Prostate gland (tissue), 2 donors: ENCODE measurements at regions of chr14 and their contacts with region 1.

Region 1: GRCh38 chr14:54572316-54572715 is 5.4 kb downstream of the SAMD4A start:
- DNase-seq: no peak
- H3K4me3 ChIP-seq: no peak overlapping the region
- H3K27ac ChIP-seq: no peak overlapping the region
- H3K4me1 ChIP-seq: no peaks in the 10 kb centered on the region
- H3K27me3 ChIP-seq: no peaks in the 10 kb centered on the region
- CTCF ChIP-seq: peak in 1 of 4 experiments; percentile 21
- POLR2A ChIP-seq: no peak

Region 2: DNA sequence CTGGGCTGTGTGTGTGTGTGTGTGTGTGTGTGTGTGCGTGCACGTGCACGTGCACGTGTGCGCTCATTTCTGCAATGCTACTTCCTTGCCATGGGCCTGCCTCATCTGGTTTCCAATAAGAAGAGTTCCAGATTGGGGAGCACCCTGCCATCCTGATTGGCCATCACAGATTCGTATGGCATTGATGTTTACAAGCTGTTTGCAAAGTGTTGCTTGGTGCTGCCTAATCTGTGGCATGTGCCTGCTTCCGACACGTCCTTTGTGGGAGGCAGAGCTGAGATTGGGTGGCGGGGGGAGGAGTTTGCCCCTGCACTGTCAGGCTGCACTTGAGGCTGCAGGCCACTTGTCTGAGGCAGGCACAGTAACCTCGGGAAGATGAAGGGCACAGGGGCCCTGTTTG is 33.9 kb after region 1 on chr14:
- intact Hi-C with region 1: loop called (anchors 5 kb)
- DNase-seq: no peak
- H3K4me3 ChIP-seq: no peak overlapping the region
- H3K27ac ChIP-seq: no peak overlapping the region
- H3K4me1 ChIP-seq: no peaks in the 10 kb centered on the region
- H3K27me3 ChIP-seq: no peaks in the 10 kb centered on the region
- CTCF ChIP-seq: no peak
- POLR2A ChIP-seq: no peak

Region 3: GRCh38 chr14:54642801-54643697 is 70.7 kb after region 1 on chr14:
- intact Hi-C with region 1: loop called (anchors 5 kb)
- DNase-seq: no peak
- H3K4me3 ChIP-seq: no peak overlapping the region
- H3K27ac ChIP-seq: no peak overlapping the region
- H3K4me1 ChIP-seq: no peaks in the 10 kb centered on the region
- H3K27me3 ChIP-seq: no peaks in the 10 kb centered on the region
- CTCF ChIP-seq: no peak
- POLR2A ChIP-seq: no peak

Region 4: GRCh38 chr14:54662491-54663133 is 90.3 kb after region 1 on chr14:
- intact Hi-C with region 1: no loop called
- DNase-seq: no peak
- H3K4me3 ChIP-seq: no peak overlapping the region
- H3K27ac ChIP-seq: no peak overlapping the region
- H3K4me1 ChIP-seq: no peaks in the 10 kb centered on the region
- H3K27me3 ChIP-seq: no peaks in the 10 kb centered on the region
- CTCF ChIP-seq: no peak
- POLR2A ChIP-seq: no peak